B cell (primary cell): ENCODE measurements at regions of chr1 and their contacts with region 1.

Region 1: GRCh38 chr1:98048244-98048643 is 127.4 kb upstream of the DPYD start:
- DNase-seq: peak; percentile 50
- ATAC-seq: no peak
- H3K4me3 ChIP-seq: no peak overlapping the region
- H3K4me3 Mint-ChIP-seq: no peak overlapping the region
- H3K27ac ChIP-seq: no peak overlapping the region
- H3K27ac Mint-ChIP-seq: no peak overlapping the region
- H3K4me1 ChIP-seq: peaks cover 24 to 34% of the 10 kb centered on the region in 2 donors
- H3K4me1 Mint-ChIP-seq: peaks cover 29% of the 10 kb centered on the region
- H3K27me3 ChIP-seq: peaks cover 1 to 66% (median 58%) of the 10 kb centered on the region in 4 experiments
- H3K27me3 Mint-ChIP-seq: peaks cover 78% of the 10 kb centered on the region
- CTCF ChIP-seq: no peak

Region 2: DNA sequence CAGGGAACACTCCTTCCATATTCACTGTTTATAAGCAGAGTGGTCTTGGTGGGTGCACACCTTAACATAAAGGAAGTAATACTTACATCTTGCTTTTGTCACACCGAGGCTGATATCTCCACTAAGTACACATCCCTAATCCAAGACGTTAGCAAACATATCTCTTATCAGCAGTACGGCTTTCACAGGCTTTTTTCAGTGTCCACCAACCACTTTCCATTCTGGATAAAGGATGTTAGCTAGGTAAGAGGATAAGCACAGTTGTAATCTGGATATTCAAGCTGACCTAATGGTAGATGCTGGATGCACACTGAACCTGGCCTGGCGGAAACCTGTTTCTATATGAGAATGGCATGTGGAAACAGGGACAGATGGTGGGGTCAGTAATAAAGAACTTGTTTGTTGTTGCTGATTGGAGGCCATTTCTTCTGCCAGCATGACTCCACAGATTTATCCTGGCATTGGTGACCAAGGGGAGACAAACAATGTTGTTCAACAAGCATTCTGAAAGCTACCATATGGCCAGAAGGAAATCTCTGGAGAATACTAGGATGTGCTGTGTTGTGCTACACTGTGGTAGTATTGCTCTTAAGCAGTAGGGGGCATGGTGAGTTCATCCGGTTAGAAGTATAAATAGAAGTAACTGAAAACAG is 910.3 kb before region 1 on chr1:
- CTCF ChIA-PET with region 1: interaction called, 10 read pairs
- POLR2A ChIA-PET with region 1: no interaction called
- intact Hi-C with region 1: loop called (anchors 1 kb)
- DNase-seq: peak; percentile 43
- ATAC-seq: peak; percentile 39
- H3K4me3 ChIP-seq: peak overlapping the region in 1 of 5 experiments; percentile 7
- H3K4me3 Mint-ChIP-seq: peak overlapping the region; percentile 23
- H3K27ac ChIP-seq: no peak overlapping the region
- H3K27ac Mint-ChIP-seq: no peak overlapping the region
- H3K4me1 ChIP-seq: peaks cover 8 to 9% of the 10 kb centered on the region in 2 donors
- H3K4me1 Mint-ChIP-seq: peaks cover 9% of the 10 kb centered on the region
- H3K27me3 ChIP-seq: no peaks in the 10 kb centered on the region
- H3K27me3 Mint-ChIP-seq: no peaks in the 10 kb centered on the region
- CTCF ChIP-seq: peak; percentile 61

Region 3: GRCh38 chr1:98177751-98178150 is 129.5 kb after region 1 on chr1:
- CTCF ChIA-PET with region 1: no interaction called
- POLR2A ChIA-PET with region 1: no interaction called
- intact Hi-C with region 1: no loop called
- DNase-seq: no peak
- ATAC-seq: no peak
- H3K4me3 ChIP-seq: no peak overlapping the region
- H3K4me3 Mint-ChIP-seq: no peak overlapping the region
- H3K27ac ChIP-seq: no peak overlapping the region
- H3K27ac Mint-ChIP-seq: no peak overlapping the region
- H3K4me1 ChIP-seq: no peaks in the 10 kb centered on the region
- H3K4me1 Mint-ChIP-seq: no peaks in the 10 kb centered on the region
- H3K27me3 ChIP-seq: no peaks in the 10 kb centered on the region
- H3K27me3 Mint-ChIP-seq: no peaks in the 10 kb centered on the region
- CTCF ChIP-seq: no peak